B cell (primary cell): ENCODE measurements at regions of chr9 and their contacts with region 1.

Region 1: GRCh38 chr9:136902259-136902821 is 16.0 kb downstream of the TRAF2 start:
- DNase-seq: peak; percentile 85
- ATAC-seq: peak; percentile 83
- H3K4me3 ChIP-seq: peak overlapping the region in 3 of 5 experiments; percentile 23 to 47 (median 32)
- H3K4me3 Mint-ChIP-seq: peak overlapping the region; percentile 83
- H3K27ac ChIP-seq: peak overlapping the region; percentile 90 to 96
- H3K27ac Mint-ChIP-seq: peak overlapping the region; percentile 96
- H3K4me1 ChIP-seq: peaks cover 24 to 41% of the 10 kb centered on the region in 2 donors
- H3K4me1 Mint-ChIP-seq: peaks cover 47% of the 10 kb centered on the region
- H3K27me3 ChIP-seq: no peaks in the 10 kb centered on the region
- H3K27me3 Mint-ChIP-seq: no peaks in the 10 kb centered on the region
- CTCF ChIP-seq: no peak

Region 2: DNA sequence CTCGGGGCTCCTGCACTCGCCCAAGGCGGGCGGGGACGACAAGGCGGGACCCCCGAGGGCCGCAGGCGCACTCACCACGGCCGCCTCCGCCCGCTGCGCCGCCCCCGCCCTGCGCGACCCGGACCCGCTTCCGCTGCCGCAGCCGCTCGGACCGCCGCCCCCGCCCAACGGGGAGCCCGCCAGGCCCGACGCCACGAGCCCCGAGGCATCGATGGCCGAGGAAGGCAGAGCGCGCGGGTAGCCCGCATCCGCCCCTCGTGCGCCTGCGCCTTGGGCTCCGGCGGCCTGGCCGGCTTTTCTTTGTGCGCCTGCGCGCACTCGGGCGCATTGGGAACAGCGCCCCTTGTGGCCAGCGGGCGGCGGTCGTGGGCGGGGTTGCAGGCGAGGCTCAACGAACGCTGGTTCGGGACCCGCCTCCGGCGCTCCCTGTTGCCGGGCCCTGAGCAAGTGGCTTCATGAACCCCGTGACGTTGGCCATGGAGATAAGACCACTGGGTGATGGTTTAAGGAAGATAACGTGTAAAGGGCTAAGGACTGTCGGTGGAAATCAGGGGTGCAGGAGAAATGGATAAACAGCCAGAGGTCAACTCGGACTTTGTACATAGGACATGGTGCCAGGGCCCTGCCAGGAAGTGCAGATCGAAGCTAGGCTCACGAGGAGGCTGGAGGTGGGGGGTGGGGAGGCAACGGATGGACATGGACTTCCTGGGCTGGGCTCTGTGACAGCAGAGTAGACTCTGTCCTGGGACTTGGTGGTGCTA is 42.4 kb after region 1 on chr9 and contains the starts of genes C8G and FBXW5:
- CTCF ChIA-PET with region 1: no interaction called
- POLR2A ChIA-PET with region 1: interaction called, 3 read pairs
- intact Hi-C with region 1: loop called (anchors 1 kb)
- DNase-seq: peak; percentile 96
- ATAC-seq: peak; percentile 91
- H3K4me3 ChIP-seq: peak within 1 kb of the TSS; percentile 47 to 72 (median 63)
- H3K4me3 Mint-ChIP-seq: peak within 1 kb of the TSS; percentile 80
- H3K27ac ChIP-seq: peak within 1 kb of the TSS in 1 of 2 donors; percentile 48
- H3K27ac Mint-ChIP-seq: peak within 1 kb of the TSS; percentile 87
- H3K4me1 ChIP-seq: peaks cover 11 to 22% of the 10 kb centered on the region in 2 donors
- H3K4me1 Mint-ChIP-seq: peaks cover 12% of the 10 kb centered on the region
- H3K27me3 ChIP-seq: no peaks in the 10 kb centered on the region
- H3K27me3 Mint-ChIP-seq: no peaks in the 10 kb centered on the region
- CTCF ChIP-seq: peak; percentile 90
- total RNA-seq, gene C8G: 1.7 and 2.8 TPM in 2 replicates
- total RNA-seq, gene FBXW5: 99.6 and 102 TPM in 2 replicates

Region 3: GRCh38 chr9:137077010-137077747 is 174.8 kb after region 1 on chr9 and contains the start of gene UAP1L1:
- CTCF ChIA-PET with region 1: no interaction called
- POLR2A ChIA-PET with region 1: no interaction called
- intact Hi-C with region 1: no loop called
- DNase-seq: peak; percentile 85
- ATAC-seq: peak; percentile 72
- H3K4me3 ChIP-seq: peak within 1 kb of the TSS; percentile 13 to 75 (median 66)
- H3K4me3 Mint-ChIP-seq: peak within 1 kb of the TSS; percentile 81
- H3K27ac ChIP-seq: peak within 1 kb of the TSS; percentile 15 to 82
- H3K27ac Mint-ChIP-seq: peak within 1 kb of the TSS; percentile 82
- H3K4me1 ChIP-seq: peaks cover 11 to 23% of the 10 kb centered on the region in 2 donors
- H3K4me1 Mint-ChIP-seq: peaks cover 19% of the 10 kb centered on the region
- H3K27me3 ChIP-seq: no peaks in the 10 kb centered on the region
- H3K27me3 Mint-ChIP-seq: no peaks in the 10 kb centered on the region
- CTCF ChIP-seq: no peak
- total RNA-seq, gene UAP1L1: 47.6 and 55.8 TPM in 2 replicates